ENCODE measurements at regions of chr6 and their contacts with region 1.

Region 1: GRCh38 chr6:159693128-159693893 is at the start of gene SOD2:
- DNase-seq: peak; percentile 85
- ATAC-seq: peak; percentile 80
- H3K4me3 Mint-ChIP-seq: peak within 1 kb of the TSS; percentile 86
- H3K27ac Mint-ChIP-seq: peak within 1 kb of the TSS; percentile 92
- H3K4me1 Mint-ChIP-seq: peaks cover 34% of the 10 kb centered on the region
- H3K27me3 Mint-ChIP-seq: no peaks in the 10 kb centered on the region
- total RNA-seq, gene SOD2: 47.8 to 50.2 TPM

Region 2: DNA sequence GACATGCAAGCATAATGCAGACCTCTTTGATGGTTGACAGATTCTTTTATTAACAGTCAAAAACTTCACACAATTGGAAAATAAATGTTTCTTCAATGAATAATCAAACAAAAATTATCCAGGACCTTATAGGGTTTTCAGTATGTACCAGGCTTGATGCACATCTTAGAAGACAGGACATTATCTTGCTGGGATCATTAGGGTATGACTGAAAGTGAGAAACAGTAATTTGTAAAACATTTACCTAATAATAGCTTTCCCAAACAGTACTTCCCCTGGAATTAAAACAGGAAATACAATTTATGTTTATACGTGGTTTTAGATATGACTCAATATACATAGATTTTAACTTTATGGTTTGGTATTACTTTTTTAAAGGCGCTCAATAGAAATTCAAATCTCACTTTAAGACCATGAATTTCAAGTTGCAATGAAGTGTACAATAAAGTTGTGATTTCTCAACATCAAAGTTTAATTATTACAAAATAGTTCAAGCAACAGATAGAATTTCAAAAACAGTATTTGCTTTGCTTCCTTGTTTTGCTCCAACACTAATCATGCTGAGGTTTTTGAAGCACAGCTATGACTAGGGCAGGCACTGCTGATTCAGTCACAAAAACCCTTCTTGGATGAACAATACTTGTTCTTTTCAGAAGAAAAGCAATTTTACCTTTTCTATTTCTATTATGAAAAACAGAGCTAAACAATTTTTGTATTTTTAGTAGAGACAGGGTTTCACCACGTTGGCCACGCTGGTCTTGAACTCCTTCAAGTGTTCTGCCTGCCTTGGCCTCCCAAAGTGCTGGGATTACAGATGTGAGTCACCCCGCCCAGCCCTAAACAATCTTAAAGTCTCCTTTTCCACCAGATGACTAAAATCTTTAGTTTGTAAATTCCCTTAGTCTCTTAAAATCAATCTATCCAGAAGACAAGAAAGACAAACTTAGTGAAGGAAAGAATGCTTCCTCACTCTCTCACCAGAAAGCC is 13.9 kb before region 1 on chr6:
- CTCF ChIA-PET with region 1: interaction called, 16 read pairs
- DNase-seq: no peak
- ATAC-seq: peak; percentile 27
- H3K4me3 Mint-ChIP-seq: no peak overlapping the region
- H3K27ac Mint-ChIP-seq: peak overlapping the region; percentile 13
- H3K4me1 Mint-ChIP-seq: peaks cover 14% of the 10 kb centered on the region
- H3K27me3 Mint-ChIP-seq: no peaks in the 10 kb centered on the region

Region 3: DNA sequence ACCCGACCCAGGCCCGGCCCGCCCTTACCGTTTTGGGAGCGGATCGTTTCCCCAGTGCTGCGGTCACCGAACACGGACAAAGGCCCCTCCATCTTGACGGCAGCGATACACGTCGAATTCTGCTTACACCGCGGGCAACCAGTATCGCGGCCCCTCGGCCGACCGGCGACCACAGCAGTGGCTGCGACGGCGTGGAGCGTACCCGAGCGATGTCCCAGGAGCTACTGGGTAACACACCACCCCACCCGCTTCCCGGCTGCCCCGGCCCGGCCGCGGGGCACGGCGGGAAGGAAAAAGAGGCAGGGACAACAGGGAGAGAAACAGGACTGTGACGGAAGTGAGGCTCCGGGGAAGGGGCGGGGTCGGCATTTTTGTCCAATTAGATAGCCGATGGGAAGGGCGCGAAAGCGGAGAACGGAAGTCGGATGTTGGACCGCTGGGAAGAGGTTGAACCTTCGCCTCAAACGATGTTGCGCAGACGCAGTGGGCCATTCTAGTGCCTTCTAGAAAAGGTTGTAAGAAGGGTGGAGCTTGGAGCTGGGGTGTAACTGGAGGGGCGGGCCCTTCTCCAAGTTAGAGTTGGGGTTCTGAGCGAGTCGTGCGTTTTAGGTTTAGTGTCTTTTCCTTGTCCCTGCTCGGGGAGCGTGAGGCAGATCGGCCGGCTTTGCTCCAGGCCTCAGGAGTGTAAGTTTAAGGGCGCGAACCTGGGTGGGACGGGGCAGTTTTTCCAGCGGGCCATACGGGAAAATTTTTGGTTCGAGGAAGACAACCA is 96.3 kb after region 1 on chr6 and contains the start of gene TCP1:
- CTCF ChIA-PET with region 1: interaction called, 19 read pairs
- DNase-seq: peak; percentile 100
- ATAC-seq: peak; percentile 80
- H3K4me3 Mint-ChIP-seq: peak within 1 kb of the TSS; percentile 95
- H3K27ac Mint-ChIP-seq: peak within 1 kb of the TSS; percentile 97
- H3K4me1 Mint-ChIP-seq: peaks cover 61% of the 10 kb centered on the region
- H3K27me3 Mint-ChIP-seq: no peaks in the 10 kb centered on the region
- total RNA-seq, gene TCP1: 239 to 320 TPM

Region 4: GRCh38 chr6:160455541-160456213 is 762.4 kb after region 1 on chr6:
- CTCF ChIA-PET with region 1: interaction called, 10 read pairs
- DNase-seq: peak; percentile 78
- ATAC-seq: peak; percentile 90
- H3K4me3 Mint-ChIP-seq: no peak overlapping the region
- H3K27ac Mint-ChIP-seq: no peak overlapping the region
- H3K4me1 Mint-ChIP-seq: peaks cover 20% of the 10 kb centered on the region
- H3K27me3 Mint-ChIP-seq: peaks cover 6% of the 10 kb centered on the region